ENCODE measurements at regions of chr1 and their contacts with region 1.

Region 1: GRCh38 chr1:151327223-151327902 is at the start of gene PI4KB:
- DNase-seq: peak; percentile 93
- H3K4me3 Mint-ChIP-seq: peak within 1 kb of the TSS; percentile 98
- H3K27ac Mint-ChIP-seq: peak within 1 kb of the TSS; percentile 95
- H3K4me1 Mint-ChIP-seq: peaks cover 36% of the 10 kb centered on the region
- H3K27me3 Mint-ChIP-seq: no peaks in the 10 kb centered on the region
- total RNA-seq, gene PI4KB: 71.2 to 72.9 TPM

Region 2: DNA sequence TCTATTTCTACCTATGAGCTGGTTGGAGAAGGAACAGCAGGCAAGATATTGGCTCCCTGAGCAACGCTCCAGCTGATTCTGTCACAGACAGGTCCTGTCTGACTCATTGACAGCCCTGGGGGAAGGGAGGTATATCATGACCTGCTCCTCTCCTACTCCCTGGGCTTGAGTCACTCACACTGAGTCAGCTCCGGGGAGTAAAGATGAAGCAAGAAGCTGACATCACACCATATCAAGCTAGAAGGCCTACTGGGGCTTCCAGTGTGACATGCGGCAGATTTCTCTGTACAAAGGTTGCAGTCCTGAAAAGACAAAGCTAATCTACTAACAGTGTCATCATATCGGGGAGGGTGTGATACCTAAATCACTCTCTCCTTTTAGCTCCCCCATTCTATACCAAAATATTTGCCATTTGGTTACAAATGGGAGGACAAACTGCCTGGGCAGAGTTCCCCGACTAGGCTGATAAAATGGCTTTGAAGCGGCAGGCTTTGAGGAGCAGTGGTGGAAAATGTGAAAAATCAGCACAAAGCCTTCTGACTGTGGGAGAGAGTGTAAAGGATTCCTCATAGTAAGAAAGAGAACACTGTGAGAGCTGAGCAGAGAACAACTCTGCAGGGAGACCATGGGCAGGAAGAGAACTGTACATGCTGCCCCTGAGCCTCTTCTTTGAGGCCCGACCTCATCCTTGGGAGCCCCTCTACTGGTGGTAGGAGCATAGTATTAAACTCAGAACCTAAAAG is 15.6 kb before region 1 on chr1:
- CTCF ChIA-PET with region 1: interaction called, 25 read pairs
- POLR2A ChIA-PET with region 1: interaction called, 71 read pairs
- DNase-seq: peak; percentile 80
- H3K4me3 Mint-ChIP-seq: no peak overlapping the region
- H3K27ac Mint-ChIP-seq: peak overlapping the region; percentile 86
- H3K4me1 Mint-ChIP-seq: peaks cover 23% of the 10 kb centered on the region
- H3K27me3 Mint-ChIP-seq: no peaks in the 10 kb centered on the region

Region 3: GRCh38 chr1:151346769-151347522 is 19.6 kb after region 1 on chr1 and contains the start of gene RFX5:
- CTCF ChIA-PET with region 1: interaction called, 19 read pairs
- POLR2A ChIA-PET with region 1: interaction called, 15 read pairs
- DNase-seq: peak; percentile 96
- H3K4me3 Mint-ChIP-seq: peak within 1 kb of the TSS; percentile 88
- H3K27ac Mint-ChIP-seq: peak within 1 kb of the TSS; percentile 94
- H3K4me1 Mint-ChIP-seq: peaks cover 39% of the 10 kb centered on the region
- H3K27me3 Mint-ChIP-seq: no peaks in the 10 kb centered on the region
- total RNA-seq, gene RFX5: 96.2 to 99.3 TPM

Region 4: DNA sequence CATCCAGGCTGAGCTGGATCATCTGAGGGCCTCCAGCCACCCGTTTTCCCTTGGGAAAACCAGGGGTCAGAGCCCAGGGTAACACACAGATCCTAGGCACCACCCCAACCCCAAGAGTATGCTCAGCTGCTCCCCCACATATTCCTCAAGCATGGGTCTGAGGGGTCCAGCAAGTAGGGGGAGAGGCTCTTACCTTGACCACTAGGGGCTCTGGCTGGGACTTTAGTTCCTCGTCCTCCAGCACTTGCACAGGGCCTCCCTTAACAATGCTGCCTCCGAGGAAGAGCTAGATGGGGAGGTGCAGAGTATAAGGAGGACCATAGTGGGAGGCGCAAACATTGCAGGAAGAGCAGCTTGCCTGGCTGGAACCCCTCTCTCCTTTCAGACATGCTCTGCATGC is 37.6 kb after region 1 on chr1:
- CTCF ChIA-PET with region 1: no interaction called
- POLR2A ChIA-PET with region 1: no interaction called
- DNase-seq: no peak
- H3K4me3 Mint-ChIP-seq: no peak overlapping the region
- H3K27ac Mint-ChIP-seq: no peak overlapping the region
- H3K4me1 Mint-ChIP-seq: no peaks in the 10 kb centered on the region
- H3K27me3 Mint-ChIP-seq: no peaks in the 10 kb centered on the region

Measured in activated CD4-positive, alpha-beta memory T cell treated with anti-CD3 and anti-CD28 coated beads, Interleukin-2, amount 10 ng/mL, durations not matched to agents 7 days and 5 days (primary cell).